Activated CD4-positive, alpha-beta T cell treated with anti-CD3 and anti-CD28 coated beads for 36 hours (primary cell): ENCODE measurements at regions of chr6 and their contacts with region 1.

Region 1: GRCh38 chr6:87742106-87742505 is 40.1 kb upstream of the AKIRIN2 start:
- DNase-seq: peak; percentile 85
- ATAC-seq: peak; percentile 88
- H3K4me3 Mint-ChIP-seq: no peak overlapping the region
- H3K27ac Mint-ChIP-seq: peak overlapping the region; percentile 76
- H3K4me1 Mint-ChIP-seq: peaks cover 31% of the 10 kb centered on the region
- H3K27me3 Mint-ChIP-seq: peaks cover 2% of the 10 kb centered on the region

Region 2: GRCh38 chr6:87653074-87653962 is 88.8 kb before region 1 on chr6:
- CTCF ChIA-PET with region 1: no interaction called
- POLR2A ChIA-PET with region 1: no interaction called
- intact Hi-C with region 1: no loop called
- DNase-seq: peak; percentile 19
- ATAC-seq: peak; percentile 97
- H3K4me3 Mint-ChIP-seq: no peak overlapping the region
- H3K27ac Mint-ChIP-seq: peak overlapping the region; percentile 28
- H3K4me1 Mint-ChIP-seq: peaks cover 23% of the 10 kb centered on the region
- H3K27me3 Mint-ChIP-seq: no peaks in the 10 kb centered on the region

Region 3: DNA sequence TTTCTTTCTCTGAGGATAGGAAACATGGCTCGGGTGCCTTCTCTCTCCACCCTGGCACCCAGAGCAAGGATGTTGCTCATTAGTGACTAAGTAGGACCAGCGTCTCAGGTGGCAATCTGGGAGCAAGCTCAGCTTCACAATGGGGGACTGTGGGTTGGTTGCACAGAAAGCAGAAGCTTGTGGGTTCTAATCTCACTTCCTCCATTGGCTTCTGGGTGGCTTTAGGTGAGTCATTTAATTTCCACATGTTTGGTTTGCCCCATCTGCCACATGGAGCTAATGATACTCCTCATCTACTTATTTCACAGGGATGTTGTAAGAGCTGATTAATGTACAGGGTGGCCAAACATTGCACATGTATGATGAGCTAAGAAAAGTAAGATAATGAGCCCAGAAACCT is 14.8 kb after region 1 on chr6:
- CTCF ChIA-PET with region 1: interaction called, 3 read pairs
- POLR2A ChIA-PET with region 1: no interaction called
- intact Hi-C with region 1: loop called in 1 of 2 experiments (anchors 2 kb)
- DNase-seq: peak; percentile 55
- ATAC-seq: peak; percentile 91
- H3K4me3 Mint-ChIP-seq: no peak overlapping the region
- H3K27ac Mint-ChIP-seq: peak overlapping the region; percentile 42
- H3K4me1 Mint-ChIP-seq: peaks cover 18% of the 10 kb centered on the region
- H3K27me3 Mint-ChIP-seq: peaks cover 2% of the 10 kb centered on the region